Activated CD4-positive, alpha-beta T cell treated with anti-CD3 and anti-CD28 coated beads, Interleukin-2, amount 10 ng/mL, durations not matched to agents 24 days and 14 days (primary cell): ENCODE measurements at regions of chr3 and their contacts with region 1.

Region 1: DNA sequence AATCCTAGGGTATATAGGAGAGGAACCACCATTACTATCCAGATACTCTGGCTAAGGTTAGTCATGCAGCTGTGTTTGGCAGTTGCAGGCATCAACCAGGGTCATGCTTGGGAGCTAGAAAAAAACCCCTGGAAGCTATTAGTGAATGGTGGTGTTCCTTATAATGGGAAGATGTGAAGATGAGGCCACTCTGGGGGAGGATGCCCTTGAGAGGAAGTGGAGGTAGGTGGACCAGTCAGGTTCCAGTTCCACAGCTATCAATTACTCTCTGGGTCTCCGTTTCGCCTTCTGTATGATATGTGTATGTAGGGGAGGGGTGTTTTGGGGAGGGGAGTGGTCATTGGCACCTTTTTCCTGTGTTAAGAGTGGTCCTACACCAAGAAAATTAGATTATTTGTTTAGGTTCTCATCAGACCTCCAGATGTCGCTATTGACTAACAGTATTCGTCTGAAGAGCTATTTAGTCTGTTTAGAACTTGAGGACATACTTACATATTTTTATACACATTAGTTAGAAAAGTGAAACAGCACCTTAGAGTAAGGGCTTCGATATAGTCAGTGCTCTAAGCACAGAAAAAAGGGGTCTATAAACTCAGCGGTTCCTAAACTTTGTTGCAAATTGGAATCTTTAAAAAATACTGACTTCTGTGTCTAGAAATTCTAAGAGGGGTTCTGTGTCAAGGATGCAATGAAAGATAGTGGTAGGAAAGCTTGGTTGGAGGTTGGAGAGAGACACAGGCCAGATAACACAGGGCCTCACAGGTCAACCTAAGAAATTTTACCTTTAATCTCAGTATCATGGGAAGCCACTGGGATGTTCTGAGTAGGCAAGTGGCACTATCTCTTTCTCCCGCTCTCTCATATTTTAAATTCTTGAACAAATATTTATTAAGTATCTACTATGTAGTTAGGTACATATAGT is 9.1 kb upstream of the HPS3 start:
- DNase-seq: peak; percentile 75
- H3K4me3 Mint-ChIP-seq: no peak overlapping the region
- H3K27ac Mint-ChIP-seq: no peak overlapping the region
- H3K4me1 Mint-ChIP-seq: peaks cover 3% of the 10 kb centered on the region
- H3K27me3 Mint-ChIP-seq: peaks cover 10% of the 10 kb centered on the region

Region 2: GRCh38 chr3:148955544-148956346 is 164.6 kb before region 1 on chr3:
- intact Hi-C with region 1: loop called (anchors 5 kb)
- DNase-seq: peak; percentile 76
- H3K4me3 Mint-ChIP-seq: no peak overlapping the region
- H3K27ac Mint-ChIP-seq: no peak overlapping the region
- H3K4me1 Mint-ChIP-seq: peaks cover 5% of the 10 kb centered on the region
- H3K27me3 Mint-ChIP-seq: peaks cover 15% of the 10 kb centered on the region

Region 3: GRCh38 chr3:149207475-149207874 is 87.2 kb after region 1 on chr3:
- intact Hi-C with region 1: no loop called
- DNase-seq: no peak
- H3K4me3 Mint-ChIP-seq: no peak overlapping the region
- H3K27ac Mint-ChIP-seq: no peak overlapping the region
- H3K4me1 Mint-ChIP-seq: peaks cover 14% of the 10 kb centered on the region
- H3K27me3 Mint-ChIP-seq: peaks cover 53% of the 10 kb centered on the region

Region 4: GRCh38 chr3:149352556-149352955 is 232.2 kb after region 1 on chr3:
- intact Hi-C with region 1: loop called (anchors 5 kb)
- DNase-seq: peak; percentile 73
- H3K4me3 Mint-ChIP-seq: no peak overlapping the region
- H3K27ac Mint-ChIP-seq: no peak overlapping the region
- H3K4me1 Mint-ChIP-seq: no peaks in the 10 kb centered on the region
- H3K27me3 Mint-ChIP-seq: peaks cover 28% of the 10 kb centered on the region